Gastrocnemius medialis (tissue), 4 donors: ENCODE measurements at regions of chr3 and their contacts with region 1.

Region 1: GRCh38 chr3:114624571-114625181 is 330.8 kb downstream of the TIGIT start:
- DNase-seq: peak; percentile 97
- ATAC-seq: peak; percentile 85 to 88
- H3K4me3 ChIP-seq: peak overlapping the region; percentile 60 to 67 (median 64)
- H3K27ac ChIP-seq: peak overlapping the region; percentile 91 to 98 (median 95)
- H3K4me1 ChIP-seq: peaks cover 83 to 87% of the 10 kb centered on the region in 2 donors
- H3K27me3 ChIP-seq: no peaks in the 10 kb centered on the region
- CTCF ChIP-seq: no peak
- POLR2A ChIP-seq: peak; percentile 77 to 88

Region 2: GRCh38 chr3:114383875-114384557 is 240.7 kb before region 1 on chr3:
- in situ Hi-C with region 1: loop called in 1 of 4 experiments (anchors 10 kb)
- intact Hi-C with region 1: loop called (anchors 5 kb)
- DNase-seq: peak; percentile 70 to 80
- ATAC-seq: peak; percentile 84 to 94
- H3K4me3 ChIP-seq: peak overlapping the region; percentile 35 to 61 (median 49)
- H3K27ac ChIP-seq: peak overlapping the region; percentile 69 to 87 (median 75)
- H3K4me1 ChIP-seq: peaks cover 56 to 57% of the 10 kb centered on the region in 2 donors
- H3K27me3 ChIP-seq: no peaks in the 10 kb centered on the region
- CTCF ChIP-seq: peak; percentile 87 to 96 (median 91)
- POLR2A ChIP-seq: peak in 1 of 2 donors; percentile 10

Region 3: GRCh38 chr3:114454551-114455251 is 170.0 kb before region 1 on chr3:
- in situ Hi-C with region 1: no loop called
- intact Hi-C with region 1: loop called (anchors 5 kb)
- DNase-seq: no peak
- ATAC-seq: peak; percentile 25 to 30
- H3K4me3 ChIP-seq: peak overlapping the region; percentile 54 to 62 (median 54)
- H3K27ac ChIP-seq: peak overlapping the region; percentile 81 to 85 (median 83)
- H3K4me1 ChIP-seq: peaks cover 75 to 88% of the 10 kb centered on the region in 2 donors
- H3K27me3 ChIP-seq: no peaks in the 10 kb centered on the region
- CTCF ChIP-seq: peak in 3 of 5 experiments; percentile 34 to 86 (median 77)
- POLR2A ChIP-seq: no peak

Region 4: GRCh38 chr3:114899186-114899931 is 274.7 kb after region 1 on chr3:
- in situ Hi-C with region 1: no loop called
- intact Hi-C with region 1: loop called (anchors 10 kb)
- DNase-seq: peak; percentile 40 to 63
- ATAC-seq: peak; percentile 88 to 93
- H3K4me3 ChIP-seq: peak overlapping the region in 3 of 4 donors; percentile 2 to 32 (median 22)
- H3K27ac ChIP-seq: peak overlapping the region; percentile 64 to 78 (median 68)
- H3K4me1 ChIP-seq: peaks cover 52 to 56% of the 10 kb centered on the region in 2 donors
- H3K27me3 ChIP-seq: no peaks in the 10 kb centered on the region
- CTCF ChIP-seq: no peak
- POLR2A ChIP-seq: no peak